Adrenal gland (tissue), 19 donors: ENCODE measurements at regions of chr1 and their contacts with region 1.

Region 1: DNA sequence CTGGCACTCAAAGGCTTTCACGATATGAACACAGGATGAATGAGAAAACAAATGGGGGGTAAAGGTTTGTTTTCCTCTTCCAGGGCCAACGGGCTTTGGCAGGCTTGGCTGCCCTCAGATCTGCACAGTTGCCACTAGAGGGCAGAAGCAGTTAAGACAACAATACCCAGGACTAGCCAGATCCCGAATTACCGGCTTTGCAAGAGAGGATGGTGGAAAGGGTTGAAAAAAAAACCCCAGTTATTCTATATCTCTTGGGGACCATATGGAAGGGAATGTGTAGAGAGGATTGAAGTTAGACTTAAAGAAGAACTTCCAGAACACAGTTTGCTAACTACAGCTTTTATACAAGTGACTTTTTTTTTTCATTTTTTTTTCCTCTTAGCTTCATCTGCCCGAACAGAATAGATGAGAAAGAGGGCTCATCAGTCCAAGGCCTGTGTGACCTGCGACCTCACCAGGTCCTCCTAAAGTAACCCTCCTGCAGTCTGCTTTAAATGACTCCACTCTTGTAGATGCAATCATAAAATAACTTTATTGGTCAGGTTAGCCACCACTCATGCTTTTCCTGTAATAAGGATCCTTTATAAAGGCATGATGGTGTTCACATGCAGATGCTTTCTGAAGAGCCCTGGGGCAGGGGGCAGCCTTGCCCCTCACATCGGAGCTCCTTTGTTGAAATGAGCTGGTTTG is 10.7 kb downstream of the FMOD start:
- DNase-seq: peak; percentile 76 to 89 (median 79)
- H3K4me3 ChIP-seq: no peak overlapping the region
- H3K27ac ChIP-seq: peak overlapping the region in 2 of 5 donors; percentile 75 to 88
- H3K4me1 ChIP-seq: peaks cover 7 to 15% of the 10 kb centered on the region in 2 donors
- H3K27me3 ChIP-seq: no peaks in the 10 kb centered on the region
- CTCF ChIP-seq: peak; percentile 59 to 95 (median 90)
- POLR2A ChIP-seq: no peak

Region 2: DNA sequence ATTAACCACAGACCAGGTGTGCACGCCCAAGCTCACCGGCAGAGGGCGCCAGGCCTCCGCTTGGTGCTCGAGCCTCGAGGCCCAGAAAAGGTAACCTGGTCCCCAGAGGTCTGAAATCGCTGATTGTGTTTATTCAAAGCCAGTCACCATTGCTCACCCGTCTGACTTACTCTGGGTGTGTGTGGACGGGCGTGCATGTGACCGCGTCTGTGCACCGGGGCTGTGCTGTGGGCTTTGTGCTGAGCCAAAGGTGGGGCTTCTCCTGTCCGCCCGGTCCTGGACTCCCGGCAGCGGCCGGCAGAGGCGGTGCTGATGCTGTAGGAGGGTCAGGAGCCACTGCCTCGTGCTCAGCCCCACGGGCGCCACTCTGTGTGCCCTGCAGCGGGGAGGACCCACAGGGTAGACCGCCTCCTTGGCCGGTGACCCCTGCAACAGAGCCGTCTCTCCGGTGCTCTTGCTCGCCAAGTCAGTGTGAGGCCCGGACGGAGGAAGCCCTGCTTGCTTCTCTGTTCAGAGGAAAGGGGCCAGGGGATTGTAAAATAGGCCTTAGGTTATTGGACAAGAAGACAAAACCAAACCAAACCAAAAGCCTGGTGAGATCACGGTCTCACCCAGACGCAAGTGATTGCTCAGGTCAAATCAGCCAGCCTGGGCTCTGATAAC is 66.9 kb before region 1 on chr1:
- intact Hi-C with region 1: loop called (anchors 5 kb)
- DNase-seq: peak; percentile 86 to 96 (median 90)
- H3K4me3 ChIP-seq: peak overlapping the region in 1 of 4 donors; percentile 25
- H3K27ac ChIP-seq: peak overlapping the region in 3 of 5 donors; percentile 28 to 85 (median 78)
- H3K4me1 ChIP-seq: peaks cover 5 to 37% of the 10 kb centered on the region in 2 donors
- H3K27me3 ChIP-seq: no peaks in the 10 kb centered on the region
- CTCF ChIP-seq: peak; percentile 96 to 99 (median 98)
- POLR2A ChIP-seq: no peak

Region 3: GRCh38 chr1:203440771-203441170 is 100.5 kb after region 1 on chr1:
- intact Hi-C with region 1: loop called (anchors 2 to 5 kb)
- DNase-seq: peak; percentile 69 to 89 (median 82)
- H3K4me3 ChIP-seq: no peak overlapping the region
- H3K27ac ChIP-seq: peak overlapping the region in 2 of 5 donors; percentile 49 to 65
- H3K4me1 ChIP-seq: peaks cover 0 to 9% of the 10 kb centered on the region in 2 donors
- H3K27me3 ChIP-seq: no peaks in the 10 kb centered on the region
- CTCF ChIP-seq: peak; percentile 19 to 77 (median 69)
- POLR2A ChIP-seq: no peak

Region 4: DNA sequence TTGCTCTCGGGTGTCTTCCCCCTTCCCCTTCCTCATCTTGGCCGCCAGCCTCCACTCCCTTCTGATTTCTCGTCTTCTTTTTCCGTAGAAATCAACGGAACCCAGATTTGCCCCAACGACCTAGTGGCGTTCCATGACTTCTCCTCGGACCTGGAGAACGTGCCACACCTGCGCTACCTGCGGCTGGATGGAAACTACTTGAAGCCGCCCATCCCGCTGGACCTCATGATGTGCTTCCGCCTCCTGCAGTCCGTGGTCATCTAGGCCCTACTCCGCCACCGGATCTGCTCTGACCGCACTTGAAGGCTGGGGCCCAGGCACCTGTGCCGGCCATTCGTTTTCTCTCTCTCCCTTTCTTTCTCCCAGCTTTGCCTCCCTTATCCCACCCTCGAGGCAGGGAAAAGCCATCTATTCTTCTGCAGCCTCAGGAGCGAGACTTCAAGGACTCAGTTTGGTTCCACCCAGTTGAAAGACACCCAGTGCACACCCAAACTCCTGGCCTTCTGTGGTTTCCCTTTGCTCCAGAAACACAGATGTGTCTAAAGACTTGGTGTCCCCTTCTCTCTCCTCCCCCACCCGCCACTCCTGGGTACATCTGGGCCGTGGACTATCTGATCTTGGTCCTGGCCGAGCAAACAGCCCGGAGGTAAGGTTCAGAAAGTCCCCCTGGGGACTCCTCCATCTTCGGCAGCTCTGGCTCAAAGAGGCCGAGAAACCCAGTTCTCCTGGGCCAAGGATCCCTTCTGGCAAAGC is 146.5 kb after region 1 on chr1:
- intact Hi-C with region 1: loop called (anchors 1 to 5 kb)
- DNase-seq: no peak
- H3K4me3 ChIP-seq: peak overlapping the region in 1 of 4 donors; percentile 31
- H3K27ac ChIP-seq: peak overlapping the region in 2 of 5 donors; percentile 68 to 70
- H3K4me1 ChIP-seq: peaks cover 0 to 12% of the 10 kb centered on the region in 2 donors
- H3K27me3 ChIP-seq: no peaks in the 10 kb centered on the region
- CTCF ChIP-seq: no peak
- POLR2A ChIP-seq: no peak

Region 5: DNA sequence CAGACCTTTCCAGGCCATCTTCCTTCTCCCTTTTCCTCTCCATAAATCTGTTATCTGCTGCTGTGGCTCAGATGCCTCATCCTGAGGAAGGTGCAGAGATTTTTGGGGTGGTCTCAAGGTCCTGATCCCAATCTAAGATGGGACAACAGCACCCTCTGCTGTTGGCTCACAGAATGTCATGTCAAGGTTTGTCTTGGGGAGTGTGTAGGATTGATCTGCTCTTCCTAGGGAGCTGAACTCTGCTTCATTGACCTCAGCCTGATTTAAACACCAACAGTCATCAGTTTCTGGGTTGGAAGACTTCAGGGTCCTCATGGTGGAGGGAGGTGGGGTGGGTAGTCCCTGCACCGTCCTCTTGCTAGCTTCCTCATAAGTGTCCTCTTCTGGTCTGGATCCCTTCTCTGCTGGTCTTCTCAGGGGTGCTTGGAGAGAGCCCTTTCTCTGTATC is 361.9 kb after region 1 on chr1:
- intact Hi-C with region 1: loop called in 1 of 2 experiments (anchors 10 kb)
- DNase-seq: peak; percentile 23 to 76 (median 50)
- H3K4me3 ChIP-seq: no peak overlapping the region
- H3K27ac ChIP-seq: no peak overlapping the region
- H3K4me1 ChIP-seq: peaks cover 0 to 6% of the 10 kb centered on the region in 2 donors
- H3K27me3 ChIP-seq: no peaks in the 10 kb centered on the region
- CTCF ChIP-seq: peak; percentile 74 to 98 (median 90)
- POLR2A ChIP-seq: no peak